ENCODE measurements at regions of chr7 and their contacts with region 1.

Region 1: DNA sequence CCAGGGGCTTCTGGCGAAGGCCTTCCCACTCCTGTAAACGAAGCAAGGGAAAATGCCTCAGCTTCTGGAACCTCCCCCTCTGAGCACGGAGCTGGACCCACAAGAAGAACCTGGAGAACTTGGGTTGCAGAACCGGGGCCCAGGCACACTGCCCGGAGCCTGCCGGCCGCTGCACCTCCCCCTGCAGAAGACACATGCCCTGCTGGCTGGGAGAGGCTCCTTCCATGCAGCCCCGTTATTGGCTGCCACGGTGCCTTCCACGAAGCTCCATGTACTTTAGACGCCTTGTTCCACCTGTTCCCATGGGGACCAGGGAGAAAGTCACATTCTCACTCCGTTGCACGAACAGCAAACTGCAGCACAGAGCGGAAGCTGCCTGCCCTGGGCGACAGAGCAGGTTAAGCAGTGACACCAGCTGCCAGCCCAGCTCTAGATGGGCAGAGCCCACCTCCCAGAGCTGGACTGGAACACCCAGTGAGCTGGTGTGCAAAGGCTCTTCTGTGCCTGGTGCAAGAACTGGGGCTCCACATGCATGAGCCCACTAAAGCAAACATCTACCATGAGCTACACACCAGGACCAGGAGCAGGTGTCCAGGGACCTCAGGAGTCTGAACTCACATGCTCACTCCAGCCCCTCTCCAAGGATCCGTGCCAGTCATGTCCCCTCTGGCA is 70.1 kb downstream of the TNS3 start:
- DNase-seq: no peak
- H3K4me3 ChIP-seq: no peak overlapping the region
- H3K27ac ChIP-seq: no peak overlapping the region
- H3K4me1 ChIP-seq: peaks cover 44% of the 10 kb centered on the region
- H3K27me3 ChIP-seq: no peaks in the 10 kb centered on the region
- CTCF ChIP-seq: no peak

Region 2: DNA sequence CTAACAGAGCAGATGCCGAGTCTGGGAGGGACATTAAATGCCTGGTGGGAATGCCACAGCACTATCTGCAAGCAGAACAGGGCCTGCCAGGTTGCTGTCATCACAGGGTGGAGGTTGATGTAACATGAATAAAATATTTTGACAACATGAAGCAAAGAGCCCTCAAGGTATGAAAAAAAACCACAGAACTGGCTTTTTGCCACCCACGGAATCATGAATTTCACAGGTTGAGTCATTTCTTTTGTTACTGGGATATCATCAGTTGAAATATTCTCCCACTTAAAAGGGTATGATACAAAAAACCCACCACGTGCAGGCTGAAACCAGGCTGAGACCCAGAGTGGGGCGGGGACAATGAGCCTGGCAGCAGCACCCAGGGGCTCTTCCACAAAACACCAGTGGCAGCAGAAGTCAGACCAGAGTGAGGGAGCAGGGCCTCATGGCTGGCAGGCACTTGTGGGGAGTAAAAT is 150.1 kb before region 1 on chr7:
- CTCF ChIA-PET with region 1: no interaction called
- POLR2A ChIA-PET with region 1: no interaction called
- intact Hi-C with region 1: no loop called
- DNase-seq: peak; percentile 88 to 95
- H3K4me3 ChIP-seq: no peak overlapping the region
- H3K27ac ChIP-seq: peak overlapping the region; percentile 69
- H3K4me1 ChIP-seq: peaks cover 20% of the 10 kb centered on the region
- H3K27me3 ChIP-seq: no peaks in the 10 kb centered on the region
- CTCF ChIP-seq: no peak

Region 3: DNA sequence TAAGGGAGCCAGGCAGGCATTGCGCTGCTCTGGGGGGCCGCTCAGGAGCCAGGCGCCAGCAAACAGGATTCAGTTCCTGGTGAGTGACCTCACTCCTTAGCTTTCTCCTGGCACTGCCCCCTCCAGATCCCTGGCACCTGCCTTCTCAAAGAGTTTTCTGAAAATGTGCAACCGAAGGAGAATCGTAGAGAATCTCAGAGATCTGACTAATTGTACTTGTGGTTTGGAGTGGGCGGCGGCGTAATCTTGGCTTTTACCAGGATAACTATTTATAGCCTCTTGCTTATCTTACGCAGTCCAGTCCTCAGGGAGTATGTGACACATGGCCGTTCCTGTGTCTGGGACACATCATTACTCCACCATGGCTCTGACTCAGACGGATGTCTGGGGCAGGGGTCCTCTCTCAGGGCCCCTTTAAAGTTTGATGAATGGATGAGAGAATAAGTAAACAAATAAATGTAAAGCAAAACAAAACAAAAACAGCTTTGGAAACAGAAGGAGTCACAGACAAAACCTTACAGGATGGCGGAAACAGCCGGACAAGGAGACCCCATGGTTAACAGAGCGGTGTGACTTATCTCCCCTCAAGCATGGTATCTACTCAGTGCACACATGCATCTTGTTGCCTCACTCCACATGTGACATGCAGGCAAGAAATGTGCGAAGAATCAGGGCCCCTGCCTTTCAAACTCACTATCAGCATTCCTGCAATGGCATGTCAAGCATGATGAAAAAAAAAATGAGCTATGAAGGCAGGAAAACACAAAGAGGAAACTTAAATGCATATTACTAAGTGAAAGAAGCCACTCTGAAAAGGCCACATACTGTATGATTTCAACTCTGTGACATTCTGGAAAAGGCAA is 29.6 kb before region 1 on chr7:
- CTCF ChIA-PET with region 1: interaction called, 3 read pairs
- POLR2A ChIA-PET with region 1: no interaction called
- intact Hi-C with region 1: loop called (anchors 1 kb)
- DNase-seq: peak; percentile 82 to 99
- H3K4me3 ChIP-seq: peak overlapping the region; percentile 15; the same call in 1 of the 2 replicates
- H3K27ac ChIP-seq: peak overlapping the region; percentile 90
- H3K4me1 ChIP-seq: peaks cover 85% of the 10 kb centered on the region
- H3K27me3 ChIP-seq: no peaks in the 10 kb centered on the region
- CTCF ChIP-seq: no peak

Region 4: DNA sequence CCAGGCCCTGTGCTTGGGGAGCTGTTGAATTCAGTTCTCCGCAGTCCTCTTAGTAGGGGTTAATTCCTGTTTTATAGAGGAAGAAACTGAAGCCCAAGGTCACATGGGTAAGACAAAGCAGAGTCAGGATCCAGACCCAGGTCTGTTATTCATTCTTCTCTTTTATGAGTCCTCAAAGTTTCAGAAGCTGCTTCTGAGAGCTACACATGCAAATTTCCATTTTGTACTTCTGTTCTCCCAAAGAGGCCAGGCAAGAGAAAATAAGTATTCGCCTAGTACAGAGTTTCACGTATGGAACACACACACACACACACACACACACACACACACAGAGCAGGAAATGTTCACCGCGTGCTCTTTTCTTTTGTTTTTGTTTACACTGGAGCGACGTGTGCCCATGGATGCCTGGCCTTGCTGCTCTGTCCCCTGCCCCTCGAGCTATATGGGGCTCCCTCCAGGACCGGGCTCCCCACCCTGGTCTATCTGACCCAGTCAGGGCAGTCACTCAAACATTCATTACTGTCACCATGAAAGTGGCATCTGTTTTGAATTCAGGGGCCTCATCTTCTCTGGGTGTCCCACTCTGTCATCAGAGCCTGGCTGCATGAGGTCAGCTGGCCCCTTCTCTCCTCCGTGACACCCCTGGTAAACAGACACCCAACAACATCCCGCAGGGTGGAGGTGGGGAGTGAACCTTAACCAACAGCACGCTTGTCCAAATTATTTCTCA is 14.3 kb before region 1 on chr7:
- CTCF ChIA-PET with region 1: interaction called, 15 read pairs
- POLR2A ChIA-PET with region 1: interaction called, 3 read pairs
- intact Hi-C with region 1: no loop called
- DNase-seq: no peak
- H3K4me3 ChIP-seq: no peak overlapping the region
- H3K27ac ChIP-seq: no peak overlapping the region
- H3K4me1 ChIP-seq: peaks cover 26% of the 10 kb centered on the region
- H3K27me3 ChIP-seq: no peaks in the 10 kb centered on the region
- CTCF ChIP-seq: no peak

Measured in PC-9 (cell line).